Panc1 (cell line): ENCODE measurements at regions of chr4 and their contacts with region 1.

Region 1: GRCh38 chr4:8679032-8679431 is 86.5 kb downstream of the CPZ start:
- DNase-seq: no peak
- ATAC-seq: no peak
- H3K4me3 ChIP-seq: no peak overlapping the region
- H3K27ac ChIP-seq: no peak overlapping the region
- H3K4me1 ChIP-seq: no peaks in the 10 kb centered on the region
- H3K27me3 ChIP-seq: no peaks in the 10 kb centered on the region; the same call in 1 of the 2 replicates
- CTCF ChIP-seq: no peak

Region 2: GRCh38 chr4:8260656-8261111 is 418.3 kb before region 1 on chr4:
- CTCF ChIA-PET with region 1: no interaction called
- POLR2A ChIA-PET with region 1: no interaction called
- in situ Hi-C with region 1: no loop called
- intact Hi-C with region 1: no loop called
- DNase-seq: no peak
- ATAC-seq: peak; percentile 60
- H3K4me3 ChIP-seq: no peak overlapping the region
- H3K27ac ChIP-seq: no peak overlapping the region
- H3K4me1 ChIP-seq: peaks cover 5% of the 10 kb centered on the region
- H3K27me3 ChIP-seq: no peaks in the 10 kb centered on the region
- CTCF ChIP-seq: no peak

Region 3: DNA sequence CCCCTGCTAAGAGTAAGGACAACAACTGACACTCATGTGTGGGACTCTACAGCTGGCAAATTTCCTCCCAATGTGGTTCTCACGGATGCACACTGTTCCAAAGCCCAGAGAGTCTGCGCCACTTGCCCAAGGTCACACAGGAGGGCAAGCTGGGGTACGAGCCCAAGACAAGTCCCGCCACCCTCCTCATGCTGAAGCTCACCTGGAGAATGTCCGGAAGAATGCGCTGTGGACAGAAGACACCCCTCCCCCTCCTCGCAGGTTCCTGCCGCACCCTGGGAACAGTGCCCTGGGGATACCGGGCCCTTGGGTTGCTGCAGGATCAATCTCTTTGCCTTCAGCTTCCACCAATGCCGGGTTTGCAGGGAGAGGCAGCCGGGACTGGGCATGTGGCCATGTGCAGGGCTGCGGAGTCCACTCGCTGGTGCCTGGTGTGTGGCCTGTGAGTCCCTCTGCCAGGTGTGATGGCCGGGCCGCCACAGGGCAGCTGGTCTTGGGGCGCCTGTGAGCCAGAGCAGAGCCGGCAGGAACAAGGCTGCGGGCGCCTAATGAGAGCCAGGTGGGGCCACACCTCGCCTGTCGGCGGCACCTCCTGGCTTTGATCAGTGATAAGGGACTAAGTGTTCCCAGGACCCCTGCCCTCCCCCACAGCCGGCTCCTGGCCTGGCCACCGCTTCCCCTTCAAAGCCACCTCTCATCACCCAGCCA is 45.9 kb after region 1 on chr4:
- CTCF ChIA-PET with region 1: no interaction called
- POLR2A ChIA-PET with region 1: no interaction called
- in situ Hi-C with region 1: no loop called
- intact Hi-C with region 1: no loop called
- DNase-seq: no peak
- ATAC-seq: no peak
- H3K4me3 ChIP-seq: no peak overlapping the region
- H3K27ac ChIP-seq: no peak overlapping the region
- H3K4me1 ChIP-seq: no peaks in the 10 kb centered on the region
- H3K27me3 ChIP-seq: no peaks in the 10 kb centered on the region
- CTCF ChIP-seq: no peak

Region 4: GRCh38 chr4:9735515-9735914 is 1056.5 kb after region 1 on chr4:
- CTCF ChIA-PET with region 1: no interaction called
- POLR2A ChIA-PET with region 1: interaction called, 10 read pairs
- in situ Hi-C with region 1: no loop called
- intact Hi-C with region 1: no loop called
- DNase-seq: no peak
- ATAC-seq: no peak
- H3K4me3 ChIP-seq: no peak overlapping the region
- H3K27ac ChIP-seq: no peak overlapping the region
- H3K4me1 ChIP-seq: no peaks in the 10 kb centered on the region
- H3K27me3 ChIP-seq: no peaks in the 10 kb centered on the region
- CTCF ChIP-seq: no peak